ENCODE measurements at regions of chr10 and their contacts with region 1.

Region 1: GRCh38 chr10:70146489-70147258 is at the start of gene TYSND1:
- DNase-seq: peak; percentile 90 to 96 (median 91)
- H3K4me3 ChIP-seq: peak within 1 kb of the TSS; percentile 50 to 87
- H3K4me3 Mint-ChIP-seq: peak within 1 kb of the TSS; percentile 90 to 93 (median 91)
- H3K27ac ChIP-seq: peak within 1 kb of the TSS; percentile 78
- H3K27ac Mint-ChIP-seq: peak within 1 kb of the TSS; percentile 92 to 99 (median 98)
- H3K4me1 ChIP-seq: peaks cover 33% of the 10 kb centered on the region
- H3K4me1 Mint-ChIP-seq: peaks cover 13 to 41% (median 32%) of the 10 kb centered on the region in 4 donors
- H3K27me3 ChIP-seq: no peaks in the 10 kb centered on the region
- H3K27me3 Mint-ChIP-seq: no peaks in the 10 kb centered on the region
- total RNA-seq, gene TYSND1: 29.3 to 31.4 TPM

Region 2: DNA sequence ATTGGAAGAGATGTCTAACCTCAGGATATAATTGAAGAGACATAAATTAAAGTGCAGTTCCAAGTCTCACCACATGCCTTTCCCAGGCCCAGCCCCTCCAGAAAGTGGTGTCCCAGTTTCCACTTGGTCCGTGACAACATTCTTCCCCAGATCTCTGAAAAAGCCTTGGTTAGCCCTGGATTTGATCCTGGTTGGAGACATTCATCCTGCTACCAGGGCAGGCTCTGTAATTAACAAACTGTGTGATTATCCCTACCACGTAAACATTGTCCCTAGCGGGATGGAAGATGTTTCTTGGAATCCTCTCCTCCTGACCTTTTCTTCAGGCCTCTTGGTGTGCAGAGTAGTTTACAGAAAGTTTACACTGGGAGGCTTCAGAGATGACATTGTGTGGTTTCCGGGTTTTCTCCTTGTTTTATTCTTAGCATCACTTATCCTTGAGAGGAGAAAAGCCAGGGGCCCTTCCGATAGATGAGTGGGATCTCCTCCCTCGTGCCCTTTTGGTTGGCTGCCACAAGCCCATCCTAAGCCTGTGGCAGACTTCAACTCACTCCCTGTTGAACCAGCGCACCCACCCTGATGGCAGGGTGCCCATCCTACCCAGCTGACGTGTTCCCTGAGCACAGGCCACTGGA is 261.2 kb before region 1 on chr10:
- CTCF ChIA-PET with region 1: no interaction called
- POLR2A ChIA-PET with region 1: no interaction called
- intact Hi-C with region 1: no loop called
- DNase-seq: no peak
- H3K4me3 ChIP-seq: no peak overlapping the region
- H3K4me3 Mint-ChIP-seq: no peak overlapping the region
- H3K27ac ChIP-seq: no peak overlapping the region
- H3K27ac Mint-ChIP-seq: peak overlapping the region in 1 of 7 donors; percentile 39
- H3K4me1 ChIP-seq: no peaks in the 10 kb centered on the region
- H3K4me1 Mint-ChIP-seq: no peaks in the 10 kb centered on the region
- H3K27me3 ChIP-seq: no peaks in the 10 kb centered on the region
- H3K27me3 Mint-ChIP-seq: peaks cover 19 to 22% of the 10 kb centered on the region in 2 donors

Region 3: GRCh38 chr10:70084189-70084588 is 62.5 kb before region 1 on chr10:
- CTCF ChIA-PET with region 1: interaction called, 22 read pairs
- POLR2A ChIA-PET with region 1: no interaction called
- intact Hi-C with region 1: loop called (anchors 1 kb)
- DNase-seq: peak in 3 of 5 donors; percentile 8 to 11 (median 9)
- H3K4me3 ChIP-seq: no peak overlapping the region
- H3K4me3 Mint-ChIP-seq: no peak overlapping the region
- H3K27ac ChIP-seq: no peak overlapping the region
- H3K27ac Mint-ChIP-seq: no peak overlapping the region
- H3K4me1 ChIP-seq: no peaks in the 10 kb centered on the region
- H3K4me1 Mint-ChIP-seq: no peaks in the 10 kb centered on the region
- H3K27me3 ChIP-seq: no peaks in the 10 kb centered on the region
- H3K27me3 Mint-ChIP-seq: no peaks in the 10 kb centered on the region

Region 4: DNA sequence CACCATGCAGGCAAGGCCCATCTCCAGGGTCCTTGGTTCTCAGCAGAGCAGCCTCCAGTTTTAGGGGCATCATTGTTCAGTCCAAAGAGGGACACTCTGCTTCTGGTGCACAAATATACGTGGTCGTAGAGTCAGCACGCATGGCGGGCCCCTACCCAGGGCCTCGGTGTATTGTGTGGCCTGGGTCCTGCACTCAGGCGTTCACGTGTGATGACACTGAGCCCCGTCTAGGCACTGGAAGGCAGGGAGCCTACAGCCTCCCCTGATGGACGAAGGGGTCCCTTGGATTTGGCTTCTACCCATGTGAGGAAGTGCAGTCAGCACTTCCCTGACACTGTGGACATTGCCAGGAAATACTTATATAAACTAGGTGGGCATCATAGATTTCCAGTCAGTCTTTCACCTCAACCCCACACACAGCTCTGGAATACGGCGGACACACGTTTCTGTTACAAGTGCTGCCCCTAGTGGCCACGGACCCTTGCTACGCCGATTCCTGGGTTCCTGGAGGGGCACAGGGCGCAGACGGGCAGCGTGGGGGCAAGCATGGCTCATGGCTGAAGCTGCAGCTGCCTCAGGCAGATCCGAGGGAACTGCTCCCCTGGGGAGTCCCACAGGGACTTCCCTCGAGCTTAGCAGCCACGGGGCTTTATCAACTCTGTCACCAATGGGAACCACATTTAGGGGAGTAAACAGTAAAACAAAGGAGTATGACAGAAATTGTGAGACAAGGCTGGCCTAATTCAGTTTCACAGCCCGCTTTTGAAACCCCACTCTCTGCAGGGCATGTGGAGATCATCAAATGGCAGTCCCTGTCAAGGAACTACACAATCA is 39.5 kb before region 1 on chr10:
- CTCF ChIA-PET with region 1: interaction called, 11 read pairs
- POLR2A ChIA-PET with region 1: no interaction called
- intact Hi-C with region 1: no loop called
- DNase-seq: no peak
- H3K4me3 ChIP-seq: no peak overlapping the region
- H3K4me3 Mint-ChIP-seq: no peak overlapping the region
- H3K27ac ChIP-seq: no peak overlapping the region
- H3K27ac Mint-ChIP-seq: peak overlapping the region in 2 of 7 donors; percentile 36 to 41
- H3K4me1 ChIP-seq: no peaks in the 10 kb centered on the region
- H3K4me1 Mint-ChIP-seq: peaks cover 0 to 1% (median under 1%) of the 10 kb centered on the region in 4 donors
- H3K27me3 ChIP-seq: no peaks in the 10 kb centered on the region
- H3K27me3 Mint-ChIP-seq: no peaks in the 10 kb centered on the region

Region 5: DNA sequence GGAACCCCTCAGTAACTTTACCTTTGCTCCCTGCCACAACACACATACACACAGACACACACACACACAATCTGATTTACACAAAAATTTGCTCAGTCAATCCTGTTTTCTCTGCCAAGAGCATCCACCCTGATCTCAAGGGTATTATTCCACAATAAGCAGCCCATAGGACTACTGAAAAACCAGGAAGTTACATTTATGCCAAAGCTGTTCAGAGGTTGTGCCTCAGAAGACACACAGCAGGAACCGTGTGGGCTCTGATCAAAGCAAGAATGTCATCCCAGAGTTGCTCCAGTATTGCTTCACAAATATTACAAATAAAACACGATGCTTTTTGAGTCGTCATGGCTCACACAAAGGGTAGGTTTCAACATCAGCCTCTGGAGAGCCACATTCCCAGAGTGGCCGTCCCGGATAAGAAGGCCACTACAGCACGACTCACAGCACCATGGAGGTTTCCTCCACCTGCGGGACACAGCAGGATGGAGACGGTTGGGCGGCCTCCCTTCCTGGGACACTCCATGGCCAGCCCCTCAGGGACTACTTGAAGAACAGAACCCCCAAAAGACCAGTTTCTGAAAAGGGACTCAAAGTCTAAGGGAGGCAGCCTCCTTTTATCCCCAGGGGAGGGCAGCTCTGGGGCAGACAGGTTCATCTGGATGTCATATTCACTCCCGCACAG is 15.7 kb before region 1 on chr10:
- CTCF ChIA-PET with region 1: interaction called, 11 read pairs
- POLR2A ChIA-PET with region 1: interaction called, 10 read pairs
- intact Hi-C with region 1: no loop called
- DNase-seq: no peak
- H3K4me3 ChIP-seq: no peak overlapping the region
- H3K4me3 Mint-ChIP-seq: peak overlapping the region in 4 of 8 donors; percentile 13 to 61 (median 24)
- H3K27ac ChIP-seq: no peak overlapping the region
- H3K27ac Mint-ChIP-seq: peak overlapping the region in 3 of 7 donors; percentile 51 to 60 (median 53)
- H3K4me1 ChIP-seq: peaks cover 11% of the 10 kb centered on the region
- H3K4me1 Mint-ChIP-seq: peaks cover 3 to 22% (median 11%) of the 10 kb centered on the region in 4 donors
- H3K27me3 ChIP-seq: no peaks in the 10 kb centered on the region
- H3K27me3 Mint-ChIP-seq: no peaks in the 10 kb centered on the region

Region 6: DNA sequence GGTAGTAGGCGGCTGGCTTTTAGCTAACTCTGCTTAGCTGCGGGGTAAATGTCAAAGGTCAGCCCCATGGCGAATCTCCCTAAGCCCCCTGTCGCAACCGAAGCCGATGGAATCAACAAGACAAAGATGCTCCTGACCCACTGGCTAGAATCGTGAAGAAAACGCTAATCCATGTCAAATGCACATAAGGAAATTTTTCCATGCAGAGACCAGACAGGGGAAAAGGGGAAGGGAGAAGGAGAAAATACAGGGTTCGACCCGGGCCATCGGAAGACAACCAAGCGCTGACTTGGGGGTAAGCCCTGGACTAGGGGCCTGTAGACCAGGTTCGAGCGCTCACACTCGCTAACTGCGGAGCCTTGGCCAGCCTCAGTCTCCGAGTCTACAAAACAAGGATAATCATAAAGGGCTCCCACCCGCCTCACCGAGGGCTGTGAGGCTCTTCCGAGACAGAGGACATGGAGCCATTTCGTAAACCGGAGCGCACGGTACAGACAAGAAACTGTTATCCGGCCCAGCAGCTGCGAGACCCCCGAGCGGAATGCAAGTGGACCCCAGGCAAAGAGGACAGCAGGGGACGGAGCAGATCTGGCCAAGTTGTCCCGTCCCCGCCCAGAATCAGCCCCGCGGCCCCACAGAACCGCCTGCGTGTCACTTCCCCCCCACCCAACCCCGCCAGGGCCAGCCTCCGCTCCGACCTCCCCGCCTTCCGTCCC is 23.1 kb after region 1 on chr10:
- CTCF ChIA-PET with region 1: interaction called, 106 read pairs
- POLR2A ChIA-PET with region 1: interaction called, 119 read pairs
- intact Hi-C with region 1: loop called (anchors 1 kb)
- DNase-seq: peak in 1 of 5 donors; percentile 38
- H3K4me3 ChIP-seq: peak overlapping the region; percentile 73 to 95
- H3K4me3 Mint-ChIP-seq: peak overlapping the region; percentile 90 to 97 (median 94)
- H3K27ac ChIP-seq: peak overlapping the region; percentile 93
- H3K27ac Mint-ChIP-seq: peak overlapping the region; percentile 90 to 99 (median 96)
- H3K4me1 ChIP-seq: peaks cover 76% of the 10 kb centered on the region
- H3K4me1 Mint-ChIP-seq: peaks cover 39 to 85% (median 54%) of the 10 kb centered on the region in 4 donors
- H3K27me3 ChIP-seq: no peaks in the 10 kb centered on the region
- H3K27me3 Mint-ChIP-seq: no peaks in the 10 kb centered on the region

Region 7: GRCh38 chr10:70221030-70221429 is 74.4 kb after region 1 on chr10:
- CTCF ChIA-PET with region 1: interaction called, 24 read pairs
- POLR2A ChIA-PET with region 1: interaction called, 10 read pairs
- intact Hi-C with region 1: loop called (anchors 1 kb)
- DNase-seq: no peak
- H3K4me3 ChIP-seq: no peak overlapping the region
- H3K4me3 Mint-ChIP-seq: peak overlapping the region in 2 of 8 donors; percentile 62 to 64
- H3K27ac ChIP-seq: no peak overlapping the region
- H3K27ac Mint-ChIP-seq: peak overlapping the region in 5 of 7 donors; percentile 7 to 87 (median 65)
- H3K4me1 ChIP-seq: peaks cover 6% of the 10 kb centered on the region
- H3K4me1 Mint-ChIP-seq: peaks cover 12 to 24% (median 16%) of the 10 kb centered on the region in 4 donors
- H3K27me3 ChIP-seq: no peaks in the 10 kb centered on the region
- H3K27me3 Mint-ChIP-seq: no peaks in the 10 kb centered on the region

Region 8: DNA sequence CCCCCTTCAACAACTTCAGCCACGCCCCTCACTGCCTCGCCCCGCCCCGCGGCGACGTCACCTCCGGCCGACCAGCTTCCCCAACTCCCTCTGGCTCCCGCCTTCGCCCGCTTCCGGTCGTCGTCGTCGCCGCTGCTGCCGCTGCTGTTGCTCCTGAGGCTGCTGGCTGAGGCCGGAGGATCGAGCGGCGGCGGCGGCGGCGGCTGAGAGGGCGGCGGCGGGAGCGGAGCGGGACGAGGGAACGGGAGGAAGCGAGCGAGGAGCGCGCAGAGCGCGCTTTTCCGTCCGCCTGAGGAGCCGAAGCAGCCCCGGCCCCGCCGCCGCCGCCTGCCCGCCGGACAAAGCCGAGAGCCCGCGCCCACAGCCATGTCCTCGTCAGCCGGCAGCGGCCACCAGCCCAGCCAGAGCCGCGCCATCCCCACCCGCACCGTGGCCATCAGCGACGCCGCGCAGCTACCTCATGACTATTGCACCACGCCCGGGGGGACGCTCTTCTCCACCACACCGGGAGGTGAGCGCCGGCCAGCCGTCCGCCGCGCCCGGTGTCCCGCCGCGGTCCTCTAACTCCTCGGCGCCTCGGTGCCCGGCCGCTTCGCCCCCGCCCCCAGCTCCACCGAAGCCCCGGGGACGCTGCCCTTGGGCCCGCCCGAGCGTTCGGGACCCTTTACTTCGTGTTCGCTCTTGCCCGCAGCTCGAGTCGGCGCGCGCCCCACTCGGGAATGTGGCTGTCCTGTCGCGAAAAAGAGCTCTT is 257.5 kb after region 1 on chr10 and contains the start of gene EIF4EBP2:
- CTCF ChIA-PET with region 1: interaction called, 13 read pairs
- POLR2A ChIA-PET with region 1: interaction called, 25 read pairs
- intact Hi-C with region 1: loop called (anchors 1 kb)
- DNase-seq: peak; percentile 95 to 99 (median 96)
- H3K4me3 ChIP-seq: peak within 1 kb of the TSS; percentile 32 to 78
- H3K4me3 Mint-ChIP-seq: peak within 1 kb of the TSS; percentile 92 to 98 (median 98)
- H3K27ac ChIP-seq: peak within 1 kb of the TSS; percentile 86
- H3K27ac Mint-ChIP-seq: peak within 1 kb of the TSS; percentile 87 to 97 (median 95)
- H3K4me1 ChIP-seq: peaks cover 32% of the 10 kb centered on the region
- H3K4me1 Mint-ChIP-seq: peaks cover 30 to 51% (median 40%) of the 10 kb centered on the region in 4 donors
- H3K27me3 ChIP-seq: no peaks in the 10 kb centered on the region
- H3K27me3 Mint-ChIP-seq: no peaks in the 10 kb centered on the region
- total RNA-seq, gene EIF4EBP2: 54.5 to 56.9 TPM